ENCODE measurements at regions of chr14 and their contacts with region 1.

Region 1: DNA sequence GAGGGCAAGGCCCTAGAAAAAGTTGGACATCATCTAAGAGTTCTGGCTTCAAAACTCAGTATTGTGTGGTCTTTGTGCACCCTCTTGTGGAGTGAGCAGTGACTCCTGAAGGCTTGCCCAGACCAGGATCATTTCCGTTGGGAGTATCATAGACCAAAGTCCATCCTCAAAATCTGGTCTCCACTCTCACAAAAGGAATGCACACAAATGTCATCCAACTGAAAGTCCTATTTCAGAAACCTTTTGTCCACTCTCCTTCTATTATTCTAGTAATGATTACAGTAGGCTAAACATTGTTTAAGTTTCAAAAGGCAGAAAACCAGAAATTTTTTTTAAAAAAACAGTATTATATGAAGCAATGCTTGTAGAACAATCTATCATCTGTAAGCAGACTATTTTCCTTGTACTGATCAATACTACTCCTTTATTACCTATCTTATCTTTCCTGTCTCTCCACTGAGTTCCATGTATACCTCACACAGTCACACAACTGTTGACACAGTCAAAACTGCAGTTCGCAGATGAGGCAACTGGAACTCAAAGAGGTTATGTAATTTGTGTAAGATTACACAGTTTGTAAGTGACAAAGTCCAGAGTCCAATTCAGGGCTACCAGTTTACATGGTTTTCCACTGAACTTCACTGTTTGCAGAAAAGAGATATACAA is 41.4 kb downstream of the COX16 start:
- DNase-seq: peak in 6 of 10 donors; percentile 16 to 82 (median 42)

Region 2: DNA sequence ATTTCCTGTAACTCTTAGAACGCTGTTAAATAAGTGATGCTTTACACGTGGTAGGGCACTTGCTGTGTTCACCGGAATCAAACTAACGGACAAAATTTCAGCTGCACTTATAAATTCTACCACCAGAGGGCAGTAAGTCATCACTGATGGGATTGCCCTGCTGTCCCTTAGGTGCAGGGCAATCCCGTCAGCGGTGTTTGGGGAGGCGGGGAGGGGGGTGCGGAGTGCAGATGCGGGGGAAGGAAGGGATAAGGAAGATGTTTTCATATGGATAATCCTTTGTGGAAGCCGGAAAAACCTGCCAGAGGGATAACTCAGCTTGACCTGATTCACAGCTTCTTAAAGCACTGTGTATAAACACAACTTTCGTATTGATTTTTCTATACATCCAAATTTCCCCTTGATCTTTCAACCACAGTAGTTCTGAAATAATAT is 499.3 kb before region 1 on chr14:
- intact Hi-C with region 1: loop called (anchors 5 kb)
- DNase-seq: peak in 4 of 10 donors; percentile 24 to 38 (median 32)

Region 3: GRCh38 chr14:70032016-70032812 is 285.9 kb before region 1 on chr14:
- intact Hi-C with region 1: no loop called
- DNase-seq: peak in 2 of 10 donors; percentile 40 to 86

Region 4: DNA sequence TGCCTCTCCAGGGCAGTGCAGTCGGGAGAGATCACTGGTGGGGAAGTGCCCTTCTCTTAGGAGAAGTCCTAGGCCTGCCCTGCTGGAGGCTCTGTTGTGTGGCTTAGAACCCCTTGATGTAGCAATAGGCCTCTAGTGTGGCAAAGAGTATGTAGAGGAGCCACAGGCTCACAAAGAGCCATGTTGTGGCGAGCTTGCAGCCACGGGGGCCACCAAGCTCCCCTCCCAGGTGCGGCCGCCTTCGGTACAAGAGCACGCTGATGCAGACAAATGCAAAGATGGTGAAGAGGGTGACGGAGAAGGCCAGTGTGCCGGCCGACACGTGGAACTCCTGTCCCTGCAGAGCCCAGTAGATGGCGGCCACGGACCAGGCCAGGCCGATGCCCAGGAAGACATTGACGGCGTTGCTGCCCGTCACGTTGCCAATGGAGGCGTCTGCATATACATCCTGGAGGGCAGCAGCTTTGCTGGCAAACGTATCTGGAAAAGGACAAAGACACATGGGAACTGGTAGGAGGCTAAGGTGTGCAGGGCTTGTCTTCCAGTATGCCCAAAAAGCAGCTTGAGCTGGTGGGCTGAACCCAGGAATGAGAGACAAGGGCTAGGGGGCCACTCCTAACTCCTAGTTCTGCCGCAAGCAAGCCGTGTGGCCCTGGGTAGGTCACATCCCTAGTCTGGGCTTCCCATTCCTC is 272.1 kb before region 1 on chr14:
- intact Hi-C with region 1: loop called (anchors 5 kb)
- DNase-seq: peak; percentile 64 to 97 (median 82)

Region 5: GRCh38 chr14:70086685-70087379 is 231.3 kb before region 1 on chr14:
- intact Hi-C with region 1: loop called (anchors 5 kb)
- DNase-seq: peak in 5 of 10 donors; percentile 20 to 88 (median 43)